ENCODE measurements at regions of chr12 and their contacts with region 1.

Region 1: GRCh38 chr12:111313833-111314259 is 55.0 kb downstream of the PHETA1 start:
- DNase-seq: peak; percentile 67 to 84
- ATAC-seq: peak; percentile 62 to 80 (median 65)
- H3K4me3 ChIP-seq: no peak overlapping the region
- H3K4me3 Mint-ChIP-seq: no peak overlapping the region
- H3K27ac ChIP-seq: no peak overlapping the region
- H3K27ac Mint-ChIP-seq: no peak overlapping the region
- H3K4me1 ChIP-seq: peaks cover 5% of the 10 kb centered on the region
- H3K4me1 Mint-ChIP-seq: peaks cover 0 to 10% of the 10 kb centered on the region in 2 donors
- H3K27me3 ChIP-seq: no peaks in the 10 kb centered on the region
- H3K27me3 Mint-ChIP-seq: peaks cover 0 to 6% of the 10 kb centered on the region in 2 donors
- CTCF ChIP-seq: peak; percentile 95

Region 2: DNA sequence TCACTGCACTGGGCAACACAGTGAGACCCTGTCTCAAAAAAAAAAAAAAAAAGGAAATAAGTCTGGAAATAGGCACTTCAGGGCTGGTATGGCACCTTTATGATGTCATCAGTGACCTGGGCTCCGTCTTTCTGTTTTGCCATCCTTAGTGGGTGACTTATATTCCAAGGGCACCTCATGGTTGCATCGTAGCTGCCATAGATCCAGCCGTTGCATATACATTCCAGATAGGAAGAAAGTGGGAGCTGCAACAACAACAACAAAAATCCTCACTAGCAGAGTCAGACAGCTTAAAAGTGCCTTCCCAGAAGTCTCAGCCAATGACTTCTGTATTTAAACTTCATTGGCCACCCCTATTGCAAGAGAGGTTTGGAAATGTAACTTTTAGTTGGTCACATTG is 419.9 kb before region 1 on chr12:
- intact Hi-C with region 1: loop called (anchors 1 kb)
- DNase-seq: no peak
- ATAC-seq: no peak
- H3K4me3 ChIP-seq: no peak overlapping the region
- H3K4me3 Mint-ChIP-seq: no peak overlapping the region
- H3K27ac ChIP-seq: no peak overlapping the region
- H3K27ac Mint-ChIP-seq: no peak overlapping the region
- H3K4me1 ChIP-seq: peaks cover 6% of the 10 kb centered on the region
- H3K4me1 Mint-ChIP-seq: peaks cover 6% of the 10 kb centered on the region in 2 donors
- H3K27me3 ChIP-seq: no peaks in the 10 kb centered on the region
- H3K27me3 Mint-ChIP-seq: peaks cover 2 to 23% of the 10 kb centered on the region in 2 donors
- CTCF ChIP-seq: no peak

Region 3: GRCh38 chr12:110937104-110937641 is 376.7 kb before region 1 on chr12:
- intact Hi-C with region 1: loop called (anchors 1 kb)
- DNase-seq: peak; percentile 46 to 77
- ATAC-seq: peak; percentile 64 to 79 (median 74)
- H3K4me3 ChIP-seq: no peak overlapping the region
- H3K4me3 Mint-ChIP-seq: no peak overlapping the region
- H3K27ac ChIP-seq: no peak overlapping the region
- H3K27ac Mint-ChIP-seq: no peak overlapping the region
- H3K4me1 ChIP-seq: peaks cover 8% of the 10 kb centered on the region
- H3K4me1 Mint-ChIP-seq: peaks cover 5 to 6% of the 10 kb centered on the region in 2 donors
- H3K27me3 ChIP-seq: no peaks in the 10 kb centered on the region
- H3K27me3 Mint-ChIP-seq: peaks cover 18 to 21% of the 10 kb centered on the region in 2 donors
- CTCF ChIP-seq: peak; percentile 99

Region 4: GRCh38 chr12:111024205-111024801 is 289.5 kb before region 1 on chr12:
- intact Hi-C with region 1: loop called (anchors 5 kb)
- DNase-seq: peak; percentile 20 to 67
- ATAC-seq: peak in 1 of 3 donors; percentile 55
- H3K4me3 ChIP-seq: no peak overlapping the region
- H3K4me3 Mint-ChIP-seq: no peak overlapping the region
- H3K27ac ChIP-seq: no peak overlapping the region
- H3K27ac Mint-ChIP-seq: no peak overlapping the region
- H3K4me1 ChIP-seq: no peaks in the 10 kb centered on the region
- H3K4me1 Mint-ChIP-seq: no peaks in the 10 kb centered on the region
- H3K27me3 ChIP-seq: peaks cover 2% of the 10 kb centered on the region
- H3K27me3 Mint-ChIP-seq: peaks cover 28 to 33% of the 10 kb centered on the region in 2 donors
- CTCF ChIP-seq: no peak

Region 5: DNA sequence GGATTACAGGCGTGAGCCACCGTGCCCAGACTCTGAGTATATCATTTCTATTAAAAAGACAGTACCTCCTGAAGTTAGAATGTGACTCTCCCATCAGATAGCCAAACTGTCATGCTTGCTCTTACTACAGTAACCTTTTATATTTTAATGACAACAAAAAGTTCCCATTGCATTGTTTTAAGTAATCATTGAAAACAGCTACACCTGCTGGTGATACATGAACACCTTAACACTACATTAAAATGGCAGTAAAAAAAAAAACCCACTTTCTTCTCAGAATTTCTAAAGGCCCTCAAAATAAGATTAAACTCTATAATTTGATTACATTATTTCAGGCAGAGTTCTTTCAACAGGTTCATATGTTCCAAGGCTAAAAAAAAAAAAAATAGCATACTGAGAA is 168.6 kb after region 1 on chr12:
- intact Hi-C with region 1: no loop called
- DNase-seq: peak in 1 of 2 donors; percentile 31
- ATAC-seq: no peak
- H3K4me3 ChIP-seq: no peak overlapping the region
- H3K4me3 Mint-ChIP-seq: no peak overlapping the region
- H3K27ac ChIP-seq: no peak overlapping the region
- H3K27ac Mint-ChIP-seq: peak overlapping the region in 1 of 2 donors; percentile 18
- H3K4me1 ChIP-seq: no peaks in the 10 kb centered on the region
- H3K4me1 Mint-ChIP-seq: no peaks in the 10 kb centered on the region
- H3K27me3 ChIP-seq: no peaks in the 10 kb centered on the region
- H3K27me3 Mint-ChIP-seq: no peaks in the 10 kb centered on the region
- CTCF ChIP-seq: no peak

Measured in natural killer cell (primary cell).